GM12878 (cell line): ENCODE measurements at regions of chr6 and their contacts with region 1.

Region 1: DNA sequence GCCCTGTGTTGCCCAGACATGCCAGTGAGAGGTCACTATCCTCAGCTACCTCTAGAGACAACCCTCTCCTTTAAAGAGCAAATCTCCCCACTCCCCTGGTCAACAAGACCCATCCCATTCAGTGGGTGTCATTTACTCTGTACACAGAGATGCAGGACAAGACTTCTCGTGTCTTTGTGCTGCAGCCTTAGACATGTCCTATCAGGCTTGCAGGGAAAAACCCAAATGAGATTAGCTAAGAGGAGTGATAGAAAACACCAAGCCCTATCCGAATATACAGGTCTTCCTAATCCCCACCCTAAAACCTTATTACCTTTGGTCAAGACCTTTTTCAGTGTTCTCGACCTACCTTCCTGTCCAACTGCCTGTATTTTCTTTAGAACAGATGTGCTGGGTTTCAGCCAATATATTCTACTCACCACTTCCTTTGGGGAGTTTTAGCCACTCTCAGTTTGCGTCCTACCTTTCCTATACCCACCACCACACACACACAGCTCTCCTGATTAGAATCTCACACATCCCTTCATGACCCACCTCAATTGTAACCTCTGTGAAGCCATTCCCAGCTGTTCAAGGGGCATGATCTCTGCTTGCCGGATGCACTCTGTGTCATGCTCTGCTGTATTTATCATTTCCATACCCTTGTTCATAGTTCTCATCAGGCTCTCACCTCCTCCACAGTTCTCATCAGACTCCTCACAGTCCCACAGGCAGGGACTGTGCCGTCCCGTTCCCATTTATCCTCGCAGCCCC is 39.7 kb downstream of the TRAM2 start:
- DNase-seq: peak; percentile 92
- ATAC-seq: peak; percentile 75
- H3K4me3 ChIP-seq: 0 out of 2 replicates have a peak overlapping the region, but pooled peaks have one; percentile 9
- H3K27ac ChIP-seq: peak overlapping the region; percentile 85
- H3K4me1 ChIP-seq: peaks cover 42% of the 10 kb centered on the region
- H3K27me3 ChIP-seq: no peaks in the 10 kb centered on the region
- CTCF ChIP-seq: no peak
- EP300 ChIP-seq: peak; percentile 36 to 48; a peak in 2 of 4 replicates
- POLR2A ChIP-seq: no peak
- RAD21 ChIP-seq: peak; percentile 15; the same call in 1 of the 2 replicates

Region 2: DNA sequence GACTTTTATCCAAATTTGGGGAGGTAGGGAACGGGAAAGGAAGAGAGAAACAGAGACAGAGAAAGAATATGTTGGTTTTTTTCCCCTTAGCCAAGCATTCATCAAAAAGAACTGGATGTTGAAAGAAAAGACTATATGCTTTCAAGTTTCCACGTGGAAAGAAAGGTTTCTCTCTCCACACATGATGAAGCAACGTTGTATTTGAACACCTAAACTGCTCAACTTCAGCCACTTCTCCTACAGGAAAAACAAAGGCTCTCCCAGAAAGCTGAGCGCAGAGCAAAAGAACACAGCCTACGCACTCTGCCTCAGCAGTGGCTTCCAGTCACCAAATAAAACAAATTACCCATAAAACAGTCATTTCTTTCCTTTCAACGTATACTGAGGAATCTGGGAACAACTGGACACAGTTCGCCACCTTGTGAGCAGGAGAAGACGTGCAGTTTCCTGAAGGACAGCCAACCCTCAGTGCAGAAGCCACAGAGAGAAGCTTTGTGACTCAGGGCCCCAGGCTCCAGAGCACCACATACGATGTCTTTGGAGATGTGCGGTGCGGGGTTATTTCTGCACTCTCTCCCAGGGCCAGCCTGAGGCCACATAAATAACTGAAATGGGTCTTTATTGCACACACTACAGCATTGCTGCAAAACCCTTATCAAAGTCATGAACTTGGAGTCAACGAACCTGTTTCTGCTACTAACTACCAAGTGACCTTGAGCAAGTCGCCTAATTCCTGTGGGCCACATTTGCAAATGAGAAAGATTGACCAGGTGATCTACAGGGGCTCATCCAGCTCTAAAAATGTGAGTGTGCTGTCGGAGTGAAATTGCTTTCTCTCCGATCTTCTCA is 303.0 kb before region 1 on chr6:
- CTCF ChIA-PET with region 1: no interaction called
- POLR2A ChIA-PET with region 1: no interaction called
- RAD21 ChIA-PET with region 1: no interaction called
- SMC1A ChIA-PET with region 1: no interaction called
- in situ Hi-C with region 1: no loop called
- intact Hi-C with region 1: no loop called
- DNase-seq: no peak
- ATAC-seq: peak; percentile 81
- H3K4me3 ChIP-seq: no peak overlapping the region
- H3K27ac ChIP-seq: no peak overlapping the region
- H3K4me1 ChIP-seq: peaks cover 9% of the 10 kb centered on the region
- H3K27me3 ChIP-seq: peaks cover 0 to 2% of the 10 kb centered on the region in 2 experiments; a peak in 2 of 4 replicates
- CTCF ChIP-seq: peak; percentile 71 to 78 (median 75)
- EP300 ChIP-seq: no peak
- POLR2A ChIP-seq: no peak
- RAD21 ChIP-seq: peak; percentile 93

Region 3: GRCh38 chr6:52491203-52492069 is 45.7 kb before region 1 on chr6:
- CTCF ChIA-PET with region 1: interaction called, 6 read pairs
- POLR2A ChIA-PET with region 1: interaction called, 14 read pairs
- RAD21 ChIA-PET with region 1: interaction called, 12 read pairs
- SMC1A ChIA-PET with region 1: interaction called, 51 read pairs
- in situ Hi-C with region 1: no loop called
- intact Hi-C with region 1: no loop called
- DNase-seq: peak; percentile 58
- ATAC-seq: peak; percentile 74
- H3K4me3 ChIP-seq: peak overlapping the region; percentile 50; the same call in 1 of the 2 replicates
- H3K27ac ChIP-seq: peak overlapping the region; percentile 89
- H3K4me1 ChIP-seq: peaks cover 56% of the 10 kb centered on the region
- H3K27me3 ChIP-seq: no peaks in the 10 kb centered on the region
- CTCF ChIP-seq: no peak
- EP300 ChIP-seq: no peak; a peak in 1 of 4 replicates
- POLR2A ChIP-seq: no peak
- RAD21 ChIP-seq: no peak

Region 4: GRCh38 chr6:52497652-52498408 is 39.3 kb before region 1 on chr6:
- CTCF ChIA-PET with region 1: interaction called, 8 read pairs
- POLR2A ChIA-PET with region 1: interaction called, 14 read pairs
- RAD21 ChIA-PET with region 1: interaction called, 22 read pairs
- SMC1A ChIA-PET with region 1: interaction called, 51 read pairs
- in situ Hi-C with region 1: no loop called
- intact Hi-C with region 1: loop called (anchors 1 kb)
- DNase-seq: peak; percentile 95
- ATAC-seq: peak; percentile 87
- H3K4me3 ChIP-seq: peak overlapping the region; percentile 61
- H3K27ac ChIP-seq: peak overlapping the region; percentile 96
- H3K4me1 ChIP-seq: peaks cover 64% of the 10 kb centered on the region
- H3K27me3 ChIP-seq: no peaks in the 10 kb centered on the region
- CTCF ChIP-seq: no peak
- EP300 ChIP-seq: peak; percentile 94 to 95
- POLR2A ChIP-seq: no peak; the same call in 1 of the 2 replicates
- RAD21 ChIP-seq: no peak

Region 5: GRCh38 chr6:52514514-52514913 is 22.7 kb before region 1 on chr6:
- CTCF ChIA-PET with region 1: no interaction called
- POLR2A ChIA-PET with region 1: no interaction called
- RAD21 ChIA-PET with region 1: no interaction called
- SMC1A ChIA-PET with region 1: interaction called, 13 read pairs
- in situ Hi-C with region 1: no loop called
- intact Hi-C with region 1: no loop called
- DNase-seq: no peak
- ATAC-seq: no peak
- H3K4me3 ChIP-seq: no peak overlapping the region
- H3K27ac ChIP-seq: no peak overlapping the region
- H3K4me1 ChIP-seq: peaks cover 7% of the 10 kb centered on the region
- H3K27me3 ChIP-seq: no peaks in the 10 kb centered on the region
- CTCF ChIP-seq: no peak
- EP300 ChIP-seq: no peak
- POLR2A ChIP-seq: no peak
- RAD21 ChIP-seq: no peak

Region 6: GRCh38 chr6:52526634-52527033 is 10.5 kb before region 1 on chr6:
- CTCF ChIA-PET with region 1: no interaction called
- POLR2A ChIA-PET with region 1: no interaction called
- RAD21 ChIA-PET with region 1: no interaction called
- SMC1A ChIA-PET with region 1: interaction called, 10 read pairs
- in situ Hi-C with region 1: no loop called
- intact Hi-C with region 1: no loop called
- DNase-seq: no peak
- ATAC-seq: no peak
- H3K4me3 ChIP-seq: no peak overlapping the region
- H3K27ac ChIP-seq: no peak overlapping the region
- H3K4me1 ChIP-seq: peaks cover 14% of the 10 kb centered on the region
- H3K27me3 ChIP-seq: no peaks in the 10 kb centered on the region
- CTCF ChIP-seq: no peak
- EP300 ChIP-seq: no peak
- POLR2A ChIP-seq: no peak
- RAD21 ChIP-seq: no peak

Region 7: GRCh38 chr6:52577022-52577777 is 40.0 kb after region 1 on chr6 and contains the start of gene TRAM2:
- CTCF ChIA-PET with region 1: interaction called, 13 read pairs
- POLR2A ChIA-PET with region 1: interaction called, 3 read pairs
- RAD21 ChIA-PET with region 1: interaction called, 16 read pairs
- SMC1A ChIA-PET with region 1: interaction called, 20 read pairs
- in situ Hi-C with region 1: no loop called
- intact Hi-C with region 1: loop called (anchors 2 kb)
- DNase-seq: no peak
- ATAC-seq: peak; percentile 73
- H3K4me3 ChIP-seq: peak within 1 kb of the TSS; percentile 81
- H3K27ac ChIP-seq: peak within 1 kb of the TSS; percentile 86
- H3K4me1 ChIP-seq: peaks cover 30% of the 10 kb centered on the region
- H3K27me3 ChIP-seq: no peaks in the 10 kb centered on the region
- CTCF ChIP-seq: no peak
- EP300 ChIP-seq: no peak
- POLR2A ChIP-seq: peak; percentile 83
- RAD21 ChIP-seq: no peak
- polyA plus RNA-seq, gene TRAM2: 2.5 TPM

Region 8: DNA sequence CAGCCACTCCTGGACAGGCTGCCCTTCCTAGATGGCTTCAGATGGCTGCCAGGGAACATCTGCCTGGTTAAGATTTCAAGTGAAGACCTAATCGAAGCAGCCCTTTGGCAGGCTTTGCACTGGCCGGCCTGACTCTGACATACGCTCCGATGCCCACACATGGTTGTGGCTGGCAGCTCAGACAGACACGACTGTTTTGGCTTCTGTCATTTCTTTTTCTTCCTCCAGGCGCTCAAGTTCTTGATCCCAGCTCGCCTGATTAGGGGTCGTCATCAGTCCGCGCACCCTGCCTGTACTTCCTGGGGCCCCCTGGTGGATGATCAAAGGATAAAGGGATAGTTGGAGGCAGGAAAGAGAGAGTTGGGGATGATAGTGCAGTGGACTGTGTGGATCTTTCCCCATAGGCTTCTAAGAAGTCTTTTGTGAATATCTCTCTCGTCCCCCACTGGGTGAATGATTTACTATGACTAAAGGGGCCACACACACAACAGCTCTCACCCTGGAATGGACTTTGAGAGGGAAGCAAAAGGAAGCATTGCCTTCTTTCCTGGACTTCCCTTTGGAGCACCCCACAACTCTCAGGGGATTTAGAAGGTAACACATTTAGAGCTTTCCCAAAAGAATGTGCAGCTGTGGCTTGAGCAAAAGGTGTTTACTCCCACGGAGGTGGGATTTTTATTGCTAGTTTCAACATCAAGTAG is 61.1 kb after region 1 on chr6:
- CTCF ChIA-PET with region 1: no interaction called
- POLR2A ChIA-PET with region 1: no interaction called
- RAD21 ChIA-PET with region 1: interaction called, 7 read pairs
- SMC1A ChIA-PET with region 1: interaction called, 11 read pairs
- in situ Hi-C with region 1: no loop called
- intact Hi-C with region 1: no loop called
- DNase-seq: no peak
- ATAC-seq: peak; percentile 53
- H3K4me3 ChIP-seq: no peak overlapping the region
- H3K27ac ChIP-seq: no peak overlapping the region
- H3K4me1 ChIP-seq: peaks cover 30% of the 10 kb centered on the region
- H3K27me3 ChIP-seq: no peaks in the 10 kb centered on the region
- CTCF ChIP-seq: peak; percentile 41 to 60 (median 51)
- EP300 ChIP-seq: no peak
- POLR2A ChIP-seq: no peak
- RAD21 ChIP-seq: peak; percentile 56

Region 9: DNA sequence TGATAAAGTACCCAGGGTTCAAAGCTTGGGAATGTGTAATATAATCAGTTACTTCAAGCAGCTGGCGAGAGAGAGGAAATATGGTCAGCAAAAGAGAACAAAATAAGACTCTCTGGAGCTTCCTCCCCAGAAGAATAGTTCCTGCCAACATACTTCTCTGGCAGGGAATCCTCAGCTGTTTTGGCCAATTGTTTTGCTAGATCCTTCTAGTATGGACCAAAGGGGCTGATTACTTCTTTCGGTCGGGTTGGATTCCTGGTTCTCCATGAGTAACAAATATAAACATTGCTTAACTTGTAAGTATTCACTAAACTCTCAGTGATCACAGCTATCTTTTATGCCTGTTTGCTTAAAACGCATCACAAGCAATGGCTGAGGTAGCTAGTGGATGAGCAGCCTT is 496.6 kb after region 1 on chr6:
- CTCF ChIA-PET with region 1: no interaction called
- POLR2A ChIA-PET with region 1: no interaction called
- RAD21 ChIA-PET with region 1: no interaction called
- SMC1A ChIA-PET with region 1: no interaction called
- in situ Hi-C with region 1: no loop called
- intact Hi-C with region 1: no loop called
- DNase-seq: no peak
- ATAC-seq: no peak
- H3K4me3 ChIP-seq: no peak overlapping the region
- H3K27ac ChIP-seq: no peak overlapping the region
- H3K4me1 ChIP-seq: no peaks in the 10 kb centered on the region
- H3K27me3 ChIP-seq: no peaks in the 10 kb centered on the region
- CTCF ChIP-seq: no peak
- EP300 ChIP-seq: no peak
- POLR2A ChIP-seq: no peak
- RAD21 ChIP-seq: no peak

Region 10: GRCh38 chr6:53233309-53233708 is 696.1 kb after region 1 on chr6:
- CTCF ChIA-PET with region 1: no interaction called
- POLR2A ChIA-PET with region 1: no interaction called
- RAD21 ChIA-PET with region 1: no interaction called
- SMC1A ChIA-PET with region 1: no interaction called
- in situ Hi-C with region 1: no loop called
- intact Hi-C with region 1: no loop called
- DNase-seq: no peak
- ATAC-seq: no peak
- H3K4me3 ChIP-seq: no peak overlapping the region
- H3K27ac ChIP-seq: no peak overlapping the region
- H3K4me1 ChIP-seq: peaks cover 26% of the 10 kb centered on the region
- H3K27me3 ChIP-seq: no peaks in the 10 kb centered on the region
- CTCF ChIP-seq: no peak
- EP300 ChIP-seq: no peak
- POLR2A ChIP-seq: no peak
- RAD21 ChIP-seq: no peak